ENCODE measurements at regions of chr7 and their contacts with region 1.

Region 1: GRCh38 chr7:876167-876967 is at the start of gene GET4:
- DNase-seq: peak; percentile 96
- H3K4me3 ChIP-seq: peak within 1 kb of the TSS; percentile 69
- H3K27ac ChIP-seq: peak within 1 kb of the TSS; percentile 72
- H3K4me1 ChIP-seq: peaks cover 13% of the 10 kb centered on the region
- H3K27me3 ChIP-seq: no peaks in the 10 kb centered on the region
- CTCF ChIP-seq: no peak
- total RNA-seq, gene GET4: 33.0 to 35.9 TPM

Region 2: GRCh38 chr7:322111-322671 is 554.2 kb before region 1 on chr7:
- intact Hi-C with region 1: loop called (anchors 10 kb)
- DNase-seq: peak; percentile 92
- H3K4me3 ChIP-seq: peak overlapping the region; percentile 4
- H3K27ac ChIP-seq: peak overlapping the region; percentile 82
- H3K4me1 ChIP-seq: peaks cover 21% of the 10 kb centered on the region
- H3K27me3 ChIP-seq: no peaks in the 10 kb centered on the region
- CTCF ChIP-seq: peak; percentile 89

Region 3: GRCh38 chr7:518630-519483 is 357.5 kb before region 1 on chr7:
- intact Hi-C with region 1: loop called (anchors 10 kb)
- DNase-seq: peak; percentile 89
- H3K4me3 ChIP-seq: peak overlapping the region; percentile 78
- H3K27ac ChIP-seq: peak overlapping the region; percentile 97
- H3K4me1 ChIP-seq: peaks cover 24% of the 10 kb centered on the region
- H3K27me3 ChIP-seq: peaks cover 29% of the 10 kb centered on the region
- CTCF ChIP-seq: no peak

Region 4: GRCh38 chr7:786472-787255 is 89.7 kb before region 1 on chr7:
- intact Hi-C with region 1: loop called (anchors 1 kb)
- DNase-seq: peak; percentile 77
- H3K4me3 ChIP-seq: no peak overlapping the region
- H3K27ac ChIP-seq: no peak overlapping the region
- H3K4me1 ChIP-seq: no peaks in the 10 kb centered on the region
- H3K27me3 ChIP-seq: no peaks in the 10 kb centered on the region
- CTCF ChIP-seq: peak; percentile 73

Region 5: GRCh38 chr7:836411-837400 is 39.7 kb before region 1 on chr7:
- intact Hi-C with region 1: loop called (anchors 5 kb)
- DNase-seq: no peak
- H3K4me3 ChIP-seq: no peak overlapping the region
- H3K27ac ChIP-seq: peak overlapping the region; percentile 13
- H3K4me1 ChIP-seq: peaks cover 12% of the 10 kb centered on the region
- H3K27me3 ChIP-seq: no peaks in the 10 kb centered on the region
- CTCF ChIP-seq: peak; percentile 37

Region 6: DNA sequence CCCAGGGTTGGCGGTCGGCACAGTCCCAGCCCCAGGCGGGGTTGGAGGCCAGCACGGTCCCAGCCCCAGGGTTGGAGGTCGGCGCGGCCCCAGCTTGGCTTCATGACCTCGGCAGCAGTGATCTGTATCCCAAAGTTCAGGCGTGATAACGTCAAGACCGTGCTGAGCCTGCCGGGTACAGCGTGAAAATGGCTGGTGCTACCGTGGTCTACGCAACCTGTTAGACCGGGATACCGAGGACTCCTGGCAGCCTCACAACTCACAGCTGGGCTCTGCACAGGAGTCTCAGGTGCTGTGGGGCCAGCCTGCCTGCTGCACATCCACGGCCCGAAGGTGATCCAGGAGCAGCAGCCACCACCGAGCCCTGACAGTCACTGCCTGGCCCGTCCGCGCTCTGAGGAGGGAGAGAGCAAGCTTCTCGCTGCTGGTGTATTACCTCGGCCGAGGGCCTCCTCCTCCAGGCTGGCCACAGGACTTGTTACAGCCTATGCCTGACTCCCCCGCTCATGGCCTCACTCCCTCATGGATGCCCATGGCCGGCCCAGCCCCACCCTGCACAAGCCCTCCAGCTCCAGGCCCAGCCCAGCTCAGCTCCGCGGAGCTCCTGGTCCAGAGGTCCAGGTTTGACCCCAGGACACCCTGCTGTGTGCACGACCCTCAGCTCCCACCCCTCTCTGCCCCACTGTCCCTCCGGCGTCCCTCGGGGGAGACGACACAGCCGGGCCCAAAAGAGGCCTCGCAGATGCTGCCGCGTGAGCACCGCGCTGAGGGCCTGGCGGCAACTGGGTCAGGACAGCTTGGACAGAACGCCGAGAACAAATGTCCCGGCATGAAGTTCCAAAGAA is 949.8 kb after region 1 on chr7:
- intact Hi-C with region 1: no loop called
- DNase-seq: no peak
- H3K4me3 ChIP-seq: no peak overlapping the region
- H3K27ac ChIP-seq: no peak overlapping the region
- H3K4me1 ChIP-seq: no peaks in the 10 kb centered on the region
- H3K27me3 ChIP-seq: no peaks in the 10 kb centered on the region
- CTCF ChIP-seq: no peak